PC-9 (cell line): ENCODE measurements at regions of chr1 and their contacts with region 1.

Region 1: GRCh38 chr1:15046487-15047165 is 106.9 kb upstream of the TMEM51 start:
- DNase-seq: peak in 1 of 2 experiments; percentile 55
- H3K4me3 ChIP-seq: no peak overlapping the region
- H3K27ac ChIP-seq: no peak overlapping the region
- H3K4me1 ChIP-seq: no peaks in the 10 kb centered on the region
- H3K27me3 ChIP-seq: no peaks in the 10 kb centered on the region
- CTCF ChIP-seq: peak; percentile 83

Region 2: DNA sequence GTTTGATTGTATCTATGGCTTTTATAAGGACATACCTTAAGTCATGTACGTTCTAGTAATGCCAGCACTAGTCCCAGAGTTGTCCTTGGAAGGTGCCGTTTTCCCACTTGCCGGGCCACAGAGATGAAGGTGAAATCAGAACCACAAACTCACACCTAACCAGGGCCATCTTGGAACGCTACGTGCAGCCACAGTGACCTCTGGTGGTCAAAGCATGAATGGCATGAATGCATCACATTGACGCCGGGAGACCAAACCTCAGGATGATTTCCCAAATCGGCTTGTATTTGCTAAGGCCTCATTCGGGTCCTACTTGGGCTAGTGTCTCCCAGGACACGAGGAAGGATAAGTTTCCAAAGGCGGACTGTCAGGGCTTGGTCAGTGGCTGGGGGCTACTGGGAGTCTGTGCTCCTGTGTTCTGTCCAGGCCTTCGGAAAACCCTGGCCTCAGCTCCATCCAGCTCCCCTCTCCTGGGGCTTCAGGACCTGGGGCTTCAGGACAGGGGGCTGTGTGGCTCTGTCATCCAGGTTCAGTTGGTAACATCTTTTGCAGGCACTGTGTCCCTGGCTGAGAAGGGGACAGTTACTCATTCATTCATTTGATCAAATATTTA is 1086.1 kb before region 1 on chr1:
- CTCF ChIA-PET with region 1: no interaction called
- POLR2A ChIA-PET with region 1: no interaction called
- intact Hi-C with region 1: loop called (anchors 10 kb)
- DNase-seq: peak in 1 of 2 experiments; percentile 41
- H3K4me3 ChIP-seq: no peak overlapping the region
- H3K27ac ChIP-seq: no peak overlapping the region
- H3K4me1 ChIP-seq: no peaks in the 10 kb centered on the region
- H3K27me3 ChIP-seq: no peaks in the 10 kb centered on the region
- CTCF ChIP-seq: peak; percentile 86

Region 3: DNA sequence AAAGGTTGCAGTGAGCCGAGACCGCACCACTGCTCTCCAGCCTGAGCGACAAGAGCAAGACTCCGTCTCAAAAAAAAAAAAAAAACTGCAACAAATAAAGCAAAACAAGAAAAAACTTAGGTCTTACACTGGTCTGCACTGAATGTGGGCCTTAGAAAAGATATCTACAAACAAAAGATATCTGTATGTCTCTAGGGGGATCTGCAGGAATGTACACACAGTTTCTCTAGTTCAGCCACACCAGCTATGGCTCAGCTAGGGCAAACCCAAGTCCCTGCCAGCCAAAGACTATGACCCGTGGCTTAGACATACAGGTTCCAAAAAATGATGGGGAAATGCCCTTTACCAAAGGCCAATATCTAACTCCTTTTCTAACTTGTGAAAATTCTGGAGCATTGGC is 650.5 kb before region 1 on chr1:
- CTCF ChIA-PET with region 1: no interaction called
- POLR2A ChIA-PET with region 1: no interaction called
- intact Hi-C with region 1: loop called (anchors 5 kb)
- DNase-seq: no peak
- H3K4me3 ChIP-seq: no peak overlapping the region
- H3K27ac ChIP-seq: no peak overlapping the region
- H3K4me1 ChIP-seq: no peaks in the 10 kb centered on the region
- H3K27me3 ChIP-seq: no peaks in the 10 kb centered on the region
- CTCF ChIP-seq: no peak

Region 4: DNA sequence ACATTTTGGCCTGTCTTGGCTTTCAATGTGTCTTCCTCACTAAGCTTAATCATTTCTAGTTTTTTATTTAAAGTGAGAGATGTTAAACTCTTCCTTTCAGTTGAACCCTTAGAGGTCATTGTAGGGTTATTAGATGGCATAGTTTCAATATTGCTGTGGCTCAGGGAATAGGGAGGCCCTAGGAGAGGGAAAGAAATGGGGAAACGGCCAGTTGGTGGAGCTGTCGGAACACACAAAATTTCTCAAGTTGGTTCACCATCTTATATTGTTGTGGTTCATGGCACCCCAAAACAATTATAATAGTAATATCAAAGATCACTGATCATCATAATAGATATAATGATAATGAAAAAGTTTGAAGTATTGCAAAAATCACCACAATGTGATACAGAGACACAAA is 479.6 kb before region 1 on chr1:
- CTCF ChIA-PET with region 1: no interaction called
- POLR2A ChIA-PET with region 1: no interaction called
- intact Hi-C with region 1: loop called (anchors 1 kb)
- DNase-seq: peak in 1 of 2 experiments; percentile 10
- H3K4me3 ChIP-seq: no peak overlapping the region
- H3K27ac ChIP-seq: no peak overlapping the region
- H3K4me1 ChIP-seq: no peaks in the 10 kb centered on the region
- H3K27me3 ChIP-seq: peaks cover 9% of the 10 kb centered on the region
- CTCF ChIP-seq: peak; percentile 32; the same call in 1 of the 2 replicates

Region 5: DNA sequence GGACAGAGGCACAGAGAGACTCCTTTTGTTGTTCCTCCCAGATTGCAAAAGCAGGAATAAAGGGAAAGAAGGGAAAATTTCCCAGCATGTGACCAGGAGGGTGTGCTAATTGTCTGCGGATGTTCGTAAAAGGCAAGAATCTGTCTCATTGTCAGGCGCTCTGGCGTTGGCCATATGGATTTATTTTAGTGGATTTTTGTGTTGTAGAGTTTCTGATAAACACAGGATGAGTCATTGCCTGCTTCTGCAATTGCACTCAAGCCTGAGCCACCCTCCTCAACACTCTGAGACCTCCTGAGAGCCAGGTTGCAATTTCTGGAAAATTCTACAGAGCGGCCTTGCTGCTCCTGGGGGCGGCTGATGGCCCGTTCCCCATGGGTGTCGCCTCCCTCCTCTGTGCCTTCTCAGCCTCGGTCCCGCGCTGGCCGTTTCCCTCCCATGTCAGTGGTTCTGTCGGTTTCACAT is 220.4 kb before region 1 on chr1:
- CTCF ChIA-PET with region 1: no interaction called
- POLR2A ChIA-PET with region 1: no interaction called
- intact Hi-C with region 1: loop called (anchors 5 kb)
- DNase-seq: no peak
- H3K4me3 ChIP-seq: no peak overlapping the region
- H3K27ac ChIP-seq: no peak overlapping the region
- H3K4me1 ChIP-seq: no peaks in the 10 kb centered on the region
- H3K27me3 ChIP-seq: 0 out of 2 replicates have a peak, but pooled peaks cover 4% of the 10 kb centered on the region
- CTCF ChIP-seq: no peak

Region 6: DNA sequence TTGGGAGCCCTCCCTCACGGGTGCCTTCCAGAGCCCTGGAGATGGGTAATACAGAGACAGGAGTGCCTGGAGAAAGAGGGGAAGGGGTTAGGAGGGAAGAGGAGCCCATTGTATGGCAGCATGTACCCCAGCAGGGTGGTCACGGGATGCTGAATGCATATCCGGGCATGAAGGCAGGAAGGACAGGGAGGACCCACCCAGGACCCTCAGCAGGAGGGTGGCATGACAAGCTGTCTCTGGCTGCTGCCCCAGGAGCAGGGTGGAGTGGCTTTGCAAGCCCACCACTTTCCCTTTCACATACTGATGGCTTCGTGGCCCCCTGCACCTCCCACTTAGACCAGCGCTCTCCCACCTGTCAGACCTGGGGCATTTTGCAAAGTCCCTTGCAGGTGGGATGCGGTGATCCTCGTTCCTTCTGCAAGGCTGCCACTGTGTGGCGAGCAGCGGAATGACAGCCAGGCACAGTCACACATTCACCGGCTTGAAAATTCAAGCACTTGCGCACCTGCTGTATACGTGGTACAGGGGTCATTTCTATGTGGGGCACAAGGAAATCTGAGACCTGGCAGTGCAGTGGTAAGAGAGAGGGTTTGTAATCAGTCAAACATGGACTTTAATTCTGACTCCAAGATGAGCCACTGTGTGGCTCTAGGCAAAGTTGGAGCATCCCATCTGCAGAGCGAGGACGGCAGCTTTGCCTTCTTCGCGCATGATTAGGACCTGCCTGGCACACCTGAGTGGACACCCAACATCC is 53.7 kb after region 1 on chr1:
- CTCF ChIA-PET with region 1: no interaction called
- POLR2A ChIA-PET with region 1: no interaction called
- intact Hi-C with region 1: loop called (anchors 1 kb)
- DNase-seq: peak; percentile 39 to 68
- H3K4me3 ChIP-seq: no peak overlapping the region
- H3K27ac ChIP-seq: no peak overlapping the region
- H3K4me1 ChIP-seq: no peaks in the 10 kb centered on the region
- H3K27me3 ChIP-seq: no peaks in the 10 kb centered on the region
- CTCF ChIP-seq: peak; percentile 88